AG04450 (cell line): ENCODE measurements at regions of chr4 and their contacts with region 1.

Region 1: DNA sequence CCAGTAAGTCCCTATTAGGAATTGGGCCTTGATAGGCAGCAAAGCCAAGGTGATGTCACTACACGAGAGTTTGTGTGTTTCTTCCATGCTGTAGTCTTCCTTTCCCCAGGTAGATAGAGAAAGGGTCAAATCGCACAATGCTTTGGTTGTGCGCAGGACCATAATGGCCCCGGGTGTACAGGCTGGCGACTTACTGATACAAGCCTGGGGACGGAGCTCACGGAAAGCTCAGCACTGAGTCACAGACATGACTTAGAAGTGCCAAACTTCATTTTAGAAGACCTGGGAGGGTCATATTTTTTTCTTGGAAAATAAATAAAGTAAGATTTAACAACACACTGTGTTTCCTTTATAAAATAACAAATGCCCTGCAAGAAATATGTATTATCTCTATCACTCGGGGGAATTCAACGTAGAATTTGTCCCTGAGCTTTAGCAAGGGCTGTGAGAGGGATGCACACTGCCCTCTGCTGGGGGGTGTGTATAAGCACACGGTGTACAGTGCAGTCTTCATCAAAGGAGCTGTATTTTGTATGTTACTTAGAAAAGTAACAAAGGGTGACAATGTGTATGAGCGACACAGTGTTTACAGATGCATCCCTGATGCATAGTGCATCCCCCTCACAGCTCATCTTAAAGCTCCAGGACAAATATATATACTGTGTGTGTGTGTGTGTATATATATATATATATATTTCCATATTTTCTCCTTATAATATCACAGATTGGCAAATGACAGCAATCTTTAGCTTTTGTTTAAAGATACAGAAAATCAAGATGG is 254.5 kb upstream of the VEGFC start:
- DNase-seq: peak; percentile 59
- H3K4me3 ChIP-seq: no peak overlapping the region
- H3K27ac ChIP-seq: no peak overlapping the region
- H3K27me3 ChIP-seq: no peaks in the 10 kb centered on the region
- CTCF ChIP-seq: peak; percentile 88

Region 2: GRCh38 chr4:176744091-176744490 is 303.2 kb before region 1 on chr4:
- CTCF ChIA-PET with region 1: interaction called, 10 read pairs
- POLR2A ChIA-PET with region 1: no interaction called
- DNase-seq: no peak
- H3K4me3 ChIP-seq: no peak overlapping the region
- H3K27ac ChIP-seq: no peak overlapping the region
- H3K27me3 ChIP-seq: no peaks in the 10 kb centered on the region
- CTCF ChIP-seq: no peak

Region 3: DNA sequence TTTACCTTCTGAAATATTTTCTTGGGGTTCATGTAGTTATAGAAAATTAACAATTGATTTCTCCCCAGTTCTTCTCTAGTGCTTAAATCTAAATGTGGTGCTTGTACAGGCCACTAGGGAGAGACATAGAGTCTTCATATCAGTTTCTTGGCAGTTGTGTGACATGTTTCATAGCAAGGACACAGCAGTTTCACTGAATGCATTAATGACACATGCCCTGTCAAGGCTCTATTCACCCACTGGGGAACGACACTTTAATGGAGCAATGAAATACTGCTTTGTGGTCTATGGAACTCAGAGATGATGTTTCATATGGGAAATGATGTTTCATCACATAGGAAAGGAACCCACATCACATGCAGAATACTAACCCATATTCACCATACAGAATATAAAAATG is 257.3 kb before region 1 on chr4:
- CTCF ChIA-PET with region 1: interaction called, 32 read pairs
- POLR2A ChIA-PET with region 1: interaction called, 18 read pairs
- DNase-seq: no peak
- H3K4me3 ChIP-seq: peak overlapping the region; percentile 85
- H3K27ac ChIP-seq: no peak overlapping the region
- H3K27me3 ChIP-seq: no peaks in the 10 kb centered on the region
- CTCF ChIP-seq: peak; percentile 79

Region 4: DNA sequence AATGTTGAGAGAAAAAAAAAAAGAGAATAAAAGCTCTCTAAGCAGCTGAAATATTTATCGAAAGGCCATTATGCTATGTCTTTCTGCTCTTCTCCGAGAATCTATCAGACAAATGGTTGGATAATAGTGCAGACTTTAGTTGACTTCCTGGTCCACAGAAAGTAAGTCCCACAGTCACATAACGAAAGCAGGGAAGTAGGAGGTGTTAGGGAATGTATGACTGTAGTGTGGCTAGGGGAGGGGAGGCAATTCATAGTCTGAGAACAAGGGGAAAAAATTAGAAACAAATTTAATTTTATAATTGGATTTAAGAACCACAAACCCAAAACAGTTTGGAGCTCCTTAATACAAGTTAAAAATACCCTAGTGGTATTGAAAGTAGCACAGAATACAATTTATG is 174.8 kb before region 1 on chr4:
- CTCF ChIA-PET with region 1: no interaction called
- POLR2A ChIA-PET with region 1: no interaction called
- DNase-seq: no peak
- H3K4me3 ChIP-seq: no peak overlapping the region
- H3K27ac ChIP-seq: no peak overlapping the region
- H3K27me3 ChIP-seq: no peaks in the 10 kb centered on the region
- CTCF ChIP-seq: no peak

Region 5: GRCh38 chr4:176949029-176949428 is 98.2 kb before region 1 on chr4:
- CTCF ChIA-PET with region 1: interaction called, 17 read pairs
- POLR2A ChIA-PET with region 1: no interaction called
- DNase-seq: peak; percentile 86
- H3K4me3 ChIP-seq: 0 out of 2 replicates have a peak overlapping the region, but pooled peaks have one; percentile 14
- H3K27ac ChIP-seq: no peak overlapping the region
- H3K27me3 ChIP-seq: no peaks in the 10 kb centered on the region
- CTCF ChIP-seq: no peak

Region 6: DNA sequence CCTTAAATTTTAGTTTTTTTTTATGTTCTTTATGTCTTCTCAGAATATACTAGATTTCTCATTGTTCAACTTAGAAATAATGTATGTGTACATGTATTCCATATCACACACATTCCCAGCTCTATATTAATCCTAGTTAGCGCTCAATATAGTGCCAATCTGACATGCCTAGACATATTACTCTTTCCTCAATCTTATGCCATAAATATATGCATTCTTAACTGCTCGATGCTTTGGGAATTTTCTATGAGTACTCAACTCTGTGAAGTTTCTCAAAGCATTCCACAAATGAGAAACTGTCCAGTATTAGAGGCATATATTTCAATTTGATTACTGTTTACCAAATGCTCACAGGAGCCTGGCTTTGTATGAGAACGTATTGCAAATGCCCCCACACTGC is 23.3 kb before region 1 on chr4:
- CTCF ChIA-PET with region 1: interaction called, 64 read pairs
- POLR2A ChIA-PET with region 1: no interaction called
- DNase-seq: no peak
- H3K4me3 ChIP-seq: no peak overlapping the region
- H3K27ac ChIP-seq: no peak overlapping the region
- H3K27me3 ChIP-seq: no peaks in the 10 kb centered on the region
- CTCF ChIP-seq: no peak

Region 7: DNA sequence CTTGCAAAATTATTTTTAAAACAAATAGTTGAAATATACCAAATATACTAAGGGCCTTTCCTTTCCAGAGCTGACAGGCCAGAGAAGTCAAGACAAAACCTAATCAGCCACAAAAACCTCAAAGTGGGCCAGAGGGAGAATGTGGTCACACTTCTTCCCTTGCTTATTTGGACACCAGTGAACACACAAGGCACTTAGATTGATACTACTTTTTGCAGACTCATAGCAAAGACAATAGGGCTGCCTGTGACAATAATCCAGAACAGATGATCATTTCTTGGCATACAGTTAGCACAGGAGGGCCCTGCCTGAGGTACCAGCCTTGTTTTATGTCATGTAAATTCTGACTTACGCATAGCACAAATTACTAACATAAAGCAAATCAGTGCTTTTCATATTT is 46.7 kb after region 1 on chr4:
- CTCF ChIA-PET with region 1: interaction called, 22 read pairs
- POLR2A ChIA-PET with region 1: no interaction called
- DNase-seq: no peak
- H3K4me3 ChIP-seq: no peak overlapping the region
- H3K27ac ChIP-seq: no peak overlapping the region
- H3K27me3 ChIP-seq: no peaks in the 10 kb centered on the region
- CTCF ChIP-seq: no peak

Region 8: GRCh38 chr4:177519481-177520200 is 472.4 kb after region 1 on chr4:
- CTCF ChIA-PET with region 1: no interaction called
- POLR2A ChIA-PET with region 1: no interaction called
- DNase-seq: no peak
- H3K4me3 ChIP-seq: no peak overlapping the region
- H3K27ac ChIP-seq: peak overlapping the region; percentile 31
- H3K27me3 ChIP-seq: no peaks in the 10 kb centered on the region
- CTCF ChIP-seq: no peak